CD4-positive, alpha-beta T cell (primary cell): ENCODE measurements at regions of chr2 and their contacts with region 1.

Region 1: GRCh38 chr2:11234309-11234708 is 79.0 kb downstream of the SLC66A3 start:
- DNase-seq: peak in 2 of 14 experiments; percentile 5 to 17
- ATAC-seq: no peak
- H3K4me3 ChIP-seq: no peak overlapping the region
- H3K4me3 Mint-ChIP-seq: no peak overlapping the region
- H3K27ac ChIP-seq: no peak overlapping the region
- H3K27ac Mint-ChIP-seq: no peak overlapping the region
- H3K4me1 ChIP-seq: no peaks in the 10 kb centered on the region
- H3K4me1 Mint-ChIP-seq: no peaks in the 10 kb centered on the region
- H3K27me3 ChIP-seq: no peaks in the 10 kb centered on the region
- H3K27me3 Mint-ChIP-seq: no peaks in the 10 kb centered on the region
- CTCF ChIP-seq: peak; percentile 51

Region 2: GRCh38 chr2:11446733-11447248 is 212.5 kb after region 1 on chr2:
- CTCF ChIA-PET with region 1: interaction called, 5 read pairs
- POLR2A ChIA-PET with region 1: no interaction called
- intact Hi-C with region 1: loop called in 1 of 2 experiments (anchors 2 kb)
- DNase-seq: peak; percentile 19 to 75 (median 34)
- ATAC-seq: peak; percentile 74
- H3K4me3 ChIP-seq: no peak overlapping the region
- H3K4me3 Mint-ChIP-seq: no peak overlapping the region
- H3K27ac ChIP-seq: no peak overlapping the region
- H3K27ac Mint-ChIP-seq: no peak overlapping the region
- H3K4me1 ChIP-seq: no peaks in the 10 kb centered on the region
- H3K4me1 Mint-ChIP-seq: no peaks in the 10 kb centered on the region
- H3K27me3 ChIP-seq: no peaks in the 10 kb centered on the region
- H3K27me3 Mint-ChIP-seq: no peaks in the 10 kb centered on the region
- CTCF ChIP-seq: peak; percentile 80